AG04450 (cell line): ENCODE measurements at regions of chr12 and their contacts with region 1.

Region 1: GRCh38 chr12:2884810-2885209 is 5.9 kb upstream of the TULP3 start:
- DNase-seq: no peak
- H3K4me3 ChIP-seq: no peak overlapping the region
- H3K27ac ChIP-seq: no peak overlapping the region
- H3K27me3 ChIP-seq: no peaks in the 10 kb centered on the region
- CTCF ChIP-seq: no peak

Region 2: DNA sequence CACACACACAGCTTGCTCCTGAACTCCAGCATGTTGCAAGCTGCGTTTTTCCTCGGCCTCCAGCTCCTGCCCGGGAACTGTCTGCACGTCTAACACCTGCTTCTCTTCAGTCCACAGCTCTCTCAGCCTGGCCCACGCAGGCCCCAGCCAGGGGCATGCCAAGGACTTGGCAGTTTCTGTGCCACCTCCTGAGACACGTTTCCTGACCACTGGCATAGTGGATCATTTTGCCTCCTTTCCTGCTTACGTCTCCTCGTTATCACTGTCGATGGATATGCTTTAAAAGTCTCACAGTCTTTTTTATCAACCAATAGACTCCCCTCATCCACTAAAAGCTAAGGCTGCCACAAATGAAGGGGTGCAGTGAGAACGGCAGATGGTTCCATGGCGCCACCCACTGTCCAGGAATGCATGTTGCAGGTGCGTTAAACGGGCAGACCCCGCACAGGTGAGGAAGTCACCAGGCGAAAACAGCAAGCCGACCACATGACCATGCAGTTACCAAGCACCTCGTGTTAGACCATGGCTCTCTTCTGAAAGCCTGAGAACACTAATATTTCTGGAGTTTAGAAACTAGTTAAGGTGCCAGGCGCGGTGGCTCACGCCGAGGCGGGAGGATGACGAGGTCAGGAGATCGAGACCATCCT is 59.7 kb after region 1 on chr12:
- CTCF ChIA-PET with region 1: interaction called, 13 read pairs
- POLR2A ChIA-PET with region 1: no interaction called
- DNase-seq: no peak
- H3K4me3 ChIP-seq: no peak overlapping the region
- H3K27ac ChIP-seq: peak overlapping the region; percentile 31
- H3K27me3 ChIP-seq: no peaks in the 10 kb centered on the region
- CTCF ChIP-seq: peak; percentile 70

Region 3: GRCh38 chr12:3041558-3042164 is 156.9 kb after region 1 on chr12:
- CTCF ChIA-PET with region 1: interaction called, 17 read pairs
- POLR2A ChIA-PET with region 1: no interaction called
- DNase-seq: peak; percentile 38
- H3K4me3 ChIP-seq: no peak overlapping the region
- H3K27ac ChIP-seq: no peak overlapping the region
- H3K27me3 ChIP-seq: no peaks in the 10 kb centered on the region
- CTCF ChIP-seq: peak; percentile 76